Posterior cingulate gyrus (tissue), 11 donors: ENCODE measurements at regions of chr5 and their contacts with region 1.

Region 1: DNA sequence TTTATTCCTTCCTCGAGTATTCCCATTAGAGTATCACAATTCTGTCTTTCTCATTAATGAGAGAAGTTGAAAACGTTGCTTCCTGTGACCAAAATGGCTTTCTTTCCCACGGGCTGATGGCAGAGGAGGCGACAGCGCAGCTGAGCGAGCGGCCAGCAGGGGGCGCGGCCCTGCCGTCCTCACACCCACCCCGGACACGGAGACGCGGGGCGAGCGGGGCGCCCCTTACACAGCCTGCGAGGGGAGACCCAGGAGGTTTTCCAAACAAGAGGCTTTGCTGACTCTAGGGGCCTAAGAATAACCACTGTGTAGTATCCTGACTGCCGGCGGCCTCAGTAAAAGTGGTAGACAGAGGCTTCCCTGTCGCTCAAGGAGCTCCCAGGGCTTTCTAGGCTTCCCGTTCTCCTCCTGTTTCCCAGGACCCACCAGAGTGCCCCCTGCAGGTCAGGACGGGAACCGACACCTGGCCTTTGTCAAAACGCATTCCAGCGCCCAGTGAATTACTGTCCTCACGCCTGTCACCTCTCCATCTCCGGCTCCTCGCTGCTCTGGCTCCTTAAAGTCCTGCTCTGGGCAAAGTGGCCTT is 27.3 kb upstream of the FGF1 start:
- DNase-seq: peak; percentile 68 to 97 (median 87)

Region 2: GRCh38 chr5:142655339-142656267 is 57.6 kb before region 1 on chr5:
- intact Hi-C with region 1: loop called (anchors 5 kb)
- DNase-seq: peak; percentile 78 to 98 (median 92)

Region 3: GRCh38 chr5:142769741-142770631 is 56.8 kb after region 1 on chr5 and contains the start of gene ARHGAP26:
- intact Hi-C with region 1: loop called (anchors 5 kb)
- DNase-seq: peak; percentile 94 to 100 (median 98)

Region 4: DNA sequence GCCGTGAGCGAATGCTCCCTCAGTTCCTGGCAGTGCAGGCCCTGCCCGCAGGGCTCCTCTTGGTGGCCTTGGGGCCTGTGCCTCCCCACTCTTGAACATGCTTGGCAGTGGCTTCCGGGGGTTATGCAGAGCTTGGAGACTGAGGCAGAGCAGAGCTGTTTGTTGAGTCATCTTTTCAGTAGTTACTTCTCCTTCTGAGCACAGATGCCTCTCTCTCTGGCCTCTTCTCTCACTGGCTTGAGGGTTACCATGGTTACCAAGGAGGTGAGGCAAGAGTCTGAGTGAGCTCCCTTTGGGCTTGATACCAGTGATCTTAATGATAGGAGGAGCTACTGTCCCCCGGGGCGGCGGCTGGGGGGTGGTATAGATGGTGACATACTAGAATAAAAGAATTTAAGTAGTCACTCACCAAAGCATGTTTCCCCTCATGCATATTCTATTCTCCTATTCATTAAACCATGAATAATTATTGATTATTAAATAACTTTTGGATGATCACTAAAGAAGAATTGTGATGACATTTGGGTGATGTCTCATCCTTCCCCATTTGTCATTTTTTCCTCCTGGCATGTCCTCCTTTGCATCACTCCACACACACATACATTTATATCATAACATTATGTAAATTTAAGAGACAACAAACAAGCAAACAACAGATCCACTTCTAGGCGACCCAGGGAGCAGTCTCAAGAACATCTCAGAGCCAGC is 168.0 kb after region 1 on chr5:
- intact Hi-C with region 1: loop called (anchors 1 kb)
- DNase-seq: no peak

Region 5: GRCh38 chr5:142888469-142889085 is 175.4 kb after region 1 on chr5:
- intact Hi-C with region 1: loop called (anchors 1 kb)
- DNase-seq: peak in 1 of 10 donors; percentile 38